Dendritic cell treated with granulocyte-macrophage colony-stimulating factor and Interleukin-4, amounts not matched to agents 40 ng/mL and 50 ng/mL, for 4 days (primary cell): ENCODE measurements at regions of chrX and their contacts with region 1.

Region 1: DNA sequence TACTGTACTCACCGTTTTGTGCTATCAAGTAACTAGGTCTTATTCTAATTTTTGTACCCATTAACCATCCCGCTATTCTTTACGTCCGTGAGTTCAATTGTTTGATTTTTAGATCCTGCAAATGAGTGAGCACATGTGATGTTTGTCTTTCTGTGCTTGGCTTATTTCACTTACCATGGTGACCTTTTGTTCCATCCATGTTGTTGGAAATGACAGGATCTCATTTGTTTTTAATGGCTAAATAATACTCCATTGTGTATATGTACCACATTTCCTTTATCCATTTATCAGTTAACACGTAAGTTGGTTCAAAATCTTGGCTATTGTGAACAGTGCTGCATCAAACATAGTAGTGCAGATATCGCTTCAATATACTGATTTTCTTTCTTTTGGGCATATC is 48.3 kb downstream of the USP9X start:
- H3K4me3 Mint-ChIP-seq: no peak overlapping the region
- H3K27ac Mint-ChIP-seq: no peak overlapping the region
- H3K4me1 Mint-ChIP-seq: no peaks in the 10 kb centered on the region
- H3K27me3 Mint-ChIP-seq: no peaks in the 10 kb centered on the region

Region 2: DNA sequence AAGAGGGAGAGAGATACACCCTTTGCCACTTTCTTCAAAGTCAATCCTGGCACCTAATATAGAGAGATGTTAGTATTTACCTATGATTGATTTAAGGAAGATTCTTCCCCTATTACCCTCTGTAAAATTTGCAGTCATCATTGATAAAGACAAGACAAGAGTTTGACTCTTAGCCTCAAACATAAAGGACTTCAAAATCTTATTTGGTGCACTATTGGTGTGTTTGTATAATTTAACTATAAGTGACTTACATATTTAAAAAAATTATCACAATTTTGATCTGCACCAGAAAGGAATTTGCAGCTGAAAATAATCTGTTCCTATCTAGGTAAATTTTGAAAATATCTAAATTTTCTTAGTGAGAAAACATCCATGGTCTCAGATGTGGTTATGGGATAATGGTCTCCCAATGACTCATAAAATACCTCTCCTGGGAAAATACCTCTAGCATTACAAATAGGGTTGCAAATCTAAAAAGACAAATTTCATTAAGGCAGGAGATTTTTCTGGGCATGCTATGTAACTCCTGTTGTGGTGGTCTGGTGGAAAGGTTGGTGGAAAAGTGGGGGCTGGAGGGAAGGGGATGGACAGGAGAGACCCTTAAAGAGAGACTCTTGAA is 224.6 kb before region 1 on chrX:
- intact Hi-C with region 1: no loop called
- H3K4me3 Mint-ChIP-seq: no peak overlapping the region
- H3K27ac Mint-ChIP-seq: no peak overlapping the region
- H3K4me1 Mint-ChIP-seq: no peaks in the 10 kb centered on the region
- H3K27me3 Mint-ChIP-seq: no peaks in the 10 kb centered on the region

Region 3: GRCh38 chrX:41167888-41168287 is 34.3 kb after region 1 on chrX:
- intact Hi-C with region 1: loop called (anchors 5 kb)
- H3K4me3 Mint-ChIP-seq: no peak overlapping the region
- H3K27ac Mint-ChIP-seq: no peak overlapping the region
- H3K4me1 Mint-ChIP-seq: no peaks in the 10 kb centered on the region
- H3K27me3 Mint-ChIP-seq: no peaks in the 10 kb centered on the region